WTC11 (cell line): ENCODE measurements at regions of chrX and their contacts with region 1.

Region 1: DNA sequence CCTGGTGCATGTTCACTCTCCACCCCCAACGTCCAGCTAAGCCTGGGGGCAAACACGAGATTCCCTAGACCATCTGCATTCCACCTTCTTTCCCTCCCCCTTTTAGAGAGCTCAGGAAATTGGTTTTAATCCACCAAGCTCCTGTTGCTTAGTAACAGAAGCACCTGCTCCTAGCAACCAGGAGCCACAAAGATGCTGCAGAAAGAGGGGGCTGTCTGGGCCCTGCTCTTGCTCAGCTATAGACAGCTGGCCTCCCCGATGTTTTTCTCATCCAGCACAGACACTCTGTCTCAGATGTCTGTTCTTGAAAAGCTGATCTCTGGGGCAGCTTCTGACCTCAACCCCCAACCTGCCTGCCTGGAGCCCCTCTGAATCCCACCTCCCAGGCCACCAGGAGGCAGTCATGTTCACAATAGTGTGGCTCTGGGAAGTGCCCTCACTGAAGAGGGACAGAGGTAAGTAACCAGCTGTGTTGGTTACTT is 71.5 kb downstream of the SLC16A2 start:
- DNase-seq: peak; percentile 58
- ATAC-seq: peak; percentile 83
- H3K4me3 Mint-ChIP-seq: no peak overlapping the region
- H3K27ac Mint-ChIP-seq: peak overlapping the region; percentile 95
- H3K4me1 Mint-ChIP-seq: peaks cover 55% of the 10 kb centered on the region
- H3K27me3 Mint-ChIP-seq: no peaks in the 10 kb centered on the region
- CTCF ChIP-seq: 0 out of 2 replicates have a peak, but pooled peaks have one; percentile 18

Region 2: GRCh38 chrX:74421036-74421739 is 71.6 kb before region 1 on chrX and contains the start of gene SLC16A2:
- CTCF ChIA-PET with region 1: interaction called, 19 read pairs
- POLR2A ChIA-PET with region 1: interaction called, 3 read pairs
- DNase-seq: peak; percentile 60
- ATAC-seq: peak; percentile 8
- H3K4me3 Mint-ChIP-seq: peak within 1 kb of the TSS; percentile 81
- H3K27ac Mint-ChIP-seq: peak within 1 kb of the TSS; percentile 38; the same call in 1 of the 2 replicates
- H3K4me1 Mint-ChIP-seq: peaks cover 28% of the 10 kb centered on the region
- H3K27me3 Mint-ChIP-seq: no peaks in the 10 kb centered on the region; the same call in none of the 2 replicates
- CTCF ChIP-seq: no peak
- total RNA-seq, gene SLC16A2: 48.4 to 55.2 TPM (median 48.4 TPM) in 3 replicates

Region 3: DNA sequence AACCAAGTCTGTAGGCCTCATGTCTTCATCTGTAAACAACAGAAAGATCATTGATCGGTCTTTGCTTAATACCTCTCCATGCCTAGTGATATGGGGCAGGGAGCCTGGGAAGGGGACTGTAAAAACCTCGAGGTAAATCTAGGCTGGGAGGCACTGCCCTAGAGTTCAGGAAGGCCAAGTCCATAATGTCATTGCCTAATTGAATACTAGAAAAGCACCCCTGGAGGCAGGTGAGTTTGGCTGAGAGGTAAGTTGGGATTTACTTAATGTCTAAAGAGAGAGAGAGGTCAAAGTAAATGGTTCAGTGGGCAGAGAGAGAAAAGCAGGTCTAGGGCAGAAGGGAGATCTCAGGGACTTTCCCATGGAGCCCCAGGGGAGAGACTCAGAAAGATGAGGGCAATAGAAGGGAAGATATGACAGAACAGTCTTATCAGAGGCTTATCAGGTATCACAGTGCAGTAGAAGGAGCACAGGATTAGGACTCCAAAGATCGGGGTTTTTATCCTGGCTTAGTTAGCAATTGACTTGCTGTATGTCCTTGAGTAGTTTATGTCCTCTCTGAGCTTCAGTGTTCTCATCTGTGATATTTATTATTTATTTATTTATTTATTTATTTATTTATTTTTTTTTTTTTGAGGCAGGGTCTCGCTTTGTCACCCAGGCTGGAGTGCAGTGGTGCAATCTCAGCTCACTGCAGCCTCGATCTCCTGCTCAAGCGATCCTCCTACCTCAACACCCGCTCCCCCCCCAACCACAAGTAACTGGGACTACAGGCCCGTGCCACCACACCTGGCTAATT is 13.8 kb after region 1 on chrX:
- CTCF ChIA-PET with region 1: interaction called, 16 read pairs
- POLR2A ChIA-PET with region 1: no interaction called
- DNase-seq: no peak
- ATAC-seq: no peak
- H3K4me3 Mint-ChIP-seq: no peak overlapping the region
- H3K27ac Mint-ChIP-seq: no peak overlapping the region
- H3K4me1 Mint-ChIP-seq: peaks cover 3% of the 10 kb centered on the region
- H3K27me3 Mint-ChIP-seq: no peaks in the 10 kb centered on the region
- CTCF ChIP-seq: no peak

Region 4: GRCh38 chrX:74536152-74536831 is 43.5 kb after region 1 on chrX:
- CTCF ChIA-PET with region 1: interaction called, 68 read pairs
- POLR2A ChIA-PET with region 1: no interaction called
- DNase-seq: peak; percentile 58
- ATAC-seq: peak; percentile 55
- H3K4me3 Mint-ChIP-seq: peak overlapping the region; percentile 66
- H3K27ac Mint-ChIP-seq: no peak overlapping the region
- H3K4me1 Mint-ChIP-seq: peaks cover 34% of the 10 kb centered on the region
- H3K27me3 Mint-ChIP-seq: no peaks in the 10 kb centered on the region; the same call in 1 of the 2 replicates
- CTCF ChIP-seq: no peak

Region 5: DNA sequence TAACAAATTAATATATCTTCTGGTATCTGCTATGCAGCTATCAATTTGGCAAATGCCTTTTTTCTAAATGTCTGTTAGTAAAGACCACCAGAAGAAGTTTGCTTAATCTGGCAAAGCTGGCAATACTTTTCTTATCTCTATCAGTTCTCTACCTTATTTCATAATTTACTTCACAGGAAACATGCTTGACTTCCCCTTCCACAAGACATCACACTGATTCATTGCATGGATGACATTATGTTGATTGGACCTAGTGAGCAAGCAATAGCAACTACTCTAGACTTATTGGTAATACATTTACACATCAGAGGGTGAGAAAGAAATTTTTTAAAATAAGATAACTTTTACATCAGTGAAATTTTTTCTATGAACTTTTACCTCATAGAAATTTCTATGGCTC is 187.6 kb after region 1 on chrX:
- CTCF ChIA-PET with region 1: no interaction called
- POLR2A ChIA-PET with region 1: no interaction called
- DNase-seq: no peak
- ATAC-seq: no peak
- H3K4me3 Mint-ChIP-seq: no peak overlapping the region
- H3K27ac Mint-ChIP-seq: no peak overlapping the region
- H3K4me1 Mint-ChIP-seq: no peaks in the 10 kb centered on the region
- H3K27me3 Mint-ChIP-seq: no peaks in the 10 kb centered on the region
- CTCF ChIP-seq: no peak